ENCODE measurements at regions of chr16 and their contacts with region 1.

Region 1: DNA sequence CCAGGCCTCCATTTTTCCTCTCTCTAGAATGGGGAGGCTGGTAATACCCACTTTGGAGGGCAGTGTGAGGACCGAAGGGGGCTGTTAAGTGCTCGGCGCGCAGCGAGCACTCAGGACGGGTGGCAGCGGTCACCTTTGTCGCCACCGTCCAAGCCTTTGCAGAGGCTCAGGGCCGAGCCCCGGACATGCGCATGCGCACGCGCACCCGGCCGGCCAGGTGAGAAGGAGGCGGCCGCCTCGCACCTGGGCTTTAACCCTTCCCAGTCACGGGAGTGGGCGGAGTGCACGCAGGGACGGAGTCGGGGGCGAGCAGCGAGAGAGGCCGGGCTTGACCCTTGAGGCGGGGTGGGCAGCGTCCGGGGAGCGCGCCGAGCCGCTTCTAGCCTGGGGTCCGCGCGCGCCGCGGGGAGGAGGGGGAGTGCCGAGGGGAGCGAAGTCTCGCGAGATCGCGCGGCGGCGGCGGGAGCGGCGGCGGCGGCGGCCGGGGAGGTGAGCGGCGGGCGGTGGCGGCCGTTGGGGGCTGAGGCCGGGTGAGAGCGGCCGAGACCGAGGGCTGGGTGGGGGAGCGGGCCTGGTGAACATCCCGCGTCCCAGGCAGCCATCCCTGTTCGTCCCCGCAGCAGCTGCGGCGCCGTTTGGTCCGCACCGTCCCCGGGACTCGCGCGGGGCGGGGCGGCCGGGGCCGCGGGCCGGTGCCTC is at the start of gene MRTFB:
- DNase-seq: peak; percentile 78 to 90 (median 83)
- ATAC-seq: peak; percentile 48 to 96 (median 84)
- H3K4me3 ChIP-seq: peak within 1 kb of the TSS; percentile 76 to 99 (median 89)
- H3K27ac ChIP-seq: peak within 1 kb of the TSS; percentile 58 to 90 (median 81)
- H3K4me1 ChIP-seq: peaks cover 0 to 23% (median 11%) of the 10 kb centered on the region in 12 donors
- H3K27me3 ChIP-seq: no peaks in the 10 kb centered on the region
- CTCF ChIP-seq: no peak
- POLR2A ChIP-seq: peak in 1 of 2 donors; percentile 72
- total RNA-seq, gene MRTFB: 16.3 to 38.3 (median 32.4) TPM

Region 2: GRCh38 chr16:13935408-13935807 is 135.6 kb before region 1 on chr16:
- intact Hi-C with region 1: loop called in 2 of 10 experiments (anchors 5 to 10 kb)
- DNase-seq: no peak
- ATAC-seq: no peak
- H3K4me3 ChIP-seq: no peak overlapping the region
- H3K27ac ChIP-seq: no peak overlapping the region
- H3K4me1 ChIP-seq: peaks cover 0 to 11% (median 5%) of the 10 kb centered on the region in 12 donors
- H3K27me3 ChIP-seq: no peaks in the 10 kb centered on the region
- CTCF ChIP-seq: peak in 9 of 12 donors; percentile 17 to 50 (median 36)
- POLR2A ChIP-seq: no peak

Region 3: DNA sequence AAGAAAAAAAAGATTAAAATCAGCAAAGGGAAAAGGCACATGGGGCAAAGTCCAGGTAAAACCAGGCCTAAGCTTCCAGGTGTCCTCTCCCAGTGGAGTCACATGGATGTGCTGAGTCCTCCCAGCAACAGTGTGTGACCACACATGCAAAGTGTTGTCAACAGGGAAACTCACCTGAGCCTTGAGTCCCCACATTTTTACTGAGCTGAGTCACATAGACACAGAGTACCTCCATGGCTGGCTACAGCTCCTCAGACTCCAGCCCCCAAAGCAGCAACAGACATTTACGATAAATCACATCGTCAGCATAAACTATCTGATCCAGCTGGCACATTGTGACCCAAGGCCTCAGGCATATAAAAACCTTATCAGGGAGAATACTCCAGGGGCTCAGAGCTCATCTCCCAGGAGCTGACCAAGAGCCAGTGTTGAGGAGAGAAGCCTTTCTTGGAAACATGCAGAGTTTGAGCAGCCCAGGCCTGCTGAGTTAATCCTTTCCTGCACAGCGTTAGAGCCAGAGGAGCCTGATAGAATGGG is 130.6 kb before region 1 on chr16:
- intact Hi-C with region 1: loop called in 2 of 10 experiments (anchors 5 to 10 kb)
- DNase-seq: no peak
- ATAC-seq: no peak
- H3K4me3 ChIP-seq: no peak overlapping the region
- H3K27ac ChIP-seq: no peak overlapping the region
- H3K4me1 ChIP-seq: peaks cover 0 to 11% (median 5%) of the 10 kb centered on the region in 12 donors
- H3K27me3 ChIP-seq: no peaks in the 10 kb centered on the region
- CTCF ChIP-seq: no peak
- POLR2A ChIP-seq: no peak

Region 4: DNA sequence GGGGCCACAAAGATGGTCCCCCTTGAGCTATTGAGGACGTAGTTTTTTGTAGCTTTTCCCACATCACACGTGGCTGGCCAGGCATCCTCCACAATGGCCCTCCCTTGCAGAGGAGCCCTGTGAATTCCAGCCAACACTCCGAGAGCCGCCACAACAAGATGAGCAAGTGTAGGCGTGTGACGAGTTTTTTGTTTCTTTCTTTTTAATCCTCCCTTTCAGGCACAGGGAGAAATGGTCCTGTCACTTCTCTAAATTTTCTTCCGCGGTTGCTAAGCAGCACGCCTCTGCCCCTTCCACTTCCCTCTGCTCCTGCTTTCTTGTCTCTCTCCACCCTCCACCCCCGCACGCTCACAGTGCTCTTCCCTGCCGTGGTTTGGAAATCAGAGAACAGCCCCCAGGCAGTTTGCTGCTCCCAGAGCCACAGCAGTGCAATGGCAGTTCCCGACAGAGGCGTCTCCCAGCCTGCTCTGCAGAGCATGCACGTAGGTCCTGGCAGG is 67.9 kb before region 1 on chr16:
- intact Hi-C with region 1: loop called in 4 of 10 experiments (anchors 5 to 10 kb)
- DNase-seq: peak; percentile 74 to 83 (median 78)
- ATAC-seq: peak; percentile 41 to 75 (median 74)
- H3K4me3 ChIP-seq: peak overlapping the region in 11 of 12 donors; percentile 6 to 51 (median 37)
- H3K27ac ChIP-seq: peak overlapping the region in 11 of 12 donors; percentile 27 to 85 (median 74)
- H3K4me1 ChIP-seq: peaks cover 0 to 70% (median 47%) of the 10 kb centered on the region in 12 donors
- H3K27me3 ChIP-seq: no peaks in the 10 kb centered on the region
- CTCF ChIP-seq: peak in 6 of 12 donors; percentile 6 to 37 (median 24)
- POLR2A ChIP-seq: no peak

Region 5: DNA sequence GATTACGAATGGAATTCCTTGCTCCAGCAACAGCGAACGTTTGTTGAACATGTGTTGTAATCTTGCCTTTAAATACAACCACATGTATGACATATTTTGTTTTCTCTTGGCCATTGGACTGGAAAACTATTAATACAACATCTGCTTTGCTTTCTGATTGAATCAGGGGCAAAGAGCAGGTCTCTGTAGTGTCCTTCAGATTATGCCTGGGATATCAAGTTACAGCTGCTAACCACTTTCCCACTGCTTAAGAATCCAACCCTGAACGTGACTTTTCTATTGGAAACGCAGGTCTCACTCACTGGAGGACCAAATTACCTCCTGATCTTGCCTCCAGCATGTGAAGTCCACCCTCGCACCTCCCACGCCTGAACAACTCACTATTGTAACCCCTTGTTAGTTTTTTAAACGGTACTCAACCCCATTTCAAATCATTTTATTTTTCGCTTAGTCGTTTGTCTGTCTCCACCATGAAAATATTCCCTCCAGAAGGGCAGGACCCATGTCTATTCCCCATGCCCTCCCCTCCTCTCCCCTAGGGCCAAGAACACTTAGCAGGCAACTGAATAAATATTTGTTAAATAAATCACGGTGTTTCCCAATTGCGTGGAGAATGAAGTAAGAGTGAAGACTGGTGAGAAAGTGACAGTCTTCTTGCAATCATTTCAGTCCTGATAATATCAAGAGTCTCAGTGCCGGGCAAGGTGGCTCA is 57.3 kb before region 1 on chr16:
- intact Hi-C with region 1: loop called in 4 of 10 experiments (anchors 5 to 10 kb)
- DNase-seq: peak in 2 of 5 donors; percentile 36 to 48
- ATAC-seq: peak; percentile 56 to 74 (median 68)
- H3K4me3 ChIP-seq: peak overlapping the region in 4 of 12 donors; percentile 7 to 32 (median 10)
- H3K27ac ChIP-seq: peak overlapping the region in 11 of 12 donors; percentile 4 to 86 (median 67)
- H3K4me1 ChIP-seq: peaks cover 0 to 54% (median 30%) of the 10 kb centered on the region in 12 donors
- H3K27me3 ChIP-seq: no peaks in the 10 kb centered on the region
- CTCF ChIP-seq: no peak
- POLR2A ChIP-seq: no peak

Region 6: DNA sequence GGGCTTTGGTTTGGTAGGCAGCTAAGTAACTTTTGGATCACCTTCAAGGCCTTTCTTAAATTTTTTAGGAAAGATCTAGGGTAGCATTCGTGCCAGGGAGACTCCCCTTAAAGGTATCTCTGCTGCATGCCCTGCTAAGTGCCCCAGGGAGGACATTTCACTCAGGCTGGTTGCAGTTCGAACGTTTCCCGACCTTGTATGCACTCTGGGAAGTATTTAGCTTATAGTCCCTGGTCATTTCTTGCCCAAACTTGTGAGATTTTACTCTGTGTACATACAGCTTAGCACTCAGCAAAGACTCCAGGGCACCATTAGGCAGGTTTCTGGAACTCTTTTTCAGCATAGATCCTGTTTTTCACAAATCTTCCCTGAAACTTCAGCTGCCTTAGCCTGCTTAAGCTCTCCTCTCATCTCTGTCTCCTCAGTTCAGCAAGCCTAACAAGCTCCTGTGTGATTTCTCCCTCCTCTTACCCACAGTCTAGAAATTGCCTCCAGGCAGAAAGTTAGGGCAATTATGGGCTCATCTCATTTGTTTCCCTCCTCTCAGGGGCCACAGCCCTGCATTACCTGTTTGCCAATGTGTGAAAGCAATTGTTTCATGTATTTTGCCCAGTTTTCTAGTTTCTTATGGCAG is 84.7 kb after region 1 on chr16:
- intact Hi-C with region 1: no loop called
- DNase-seq: no peak
- ATAC-seq: peak; percentile 50 to 62 (median 60)
- H3K4me3 ChIP-seq: no peak overlapping the region
- H3K27ac ChIP-seq: peak overlapping the region in 8 of 12 donors; percentile 8 to 45 (median 34)
- H3K4me1 ChIP-seq: peaks cover 0 to 35% (median 6%) of the 10 kb centered on the region in 12 donors
- H3K27me3 ChIP-seq: no peaks in the 10 kb centered on the region
- CTCF ChIP-seq: no peak
- POLR2A ChIP-seq: no peak

Region 7: DNA sequence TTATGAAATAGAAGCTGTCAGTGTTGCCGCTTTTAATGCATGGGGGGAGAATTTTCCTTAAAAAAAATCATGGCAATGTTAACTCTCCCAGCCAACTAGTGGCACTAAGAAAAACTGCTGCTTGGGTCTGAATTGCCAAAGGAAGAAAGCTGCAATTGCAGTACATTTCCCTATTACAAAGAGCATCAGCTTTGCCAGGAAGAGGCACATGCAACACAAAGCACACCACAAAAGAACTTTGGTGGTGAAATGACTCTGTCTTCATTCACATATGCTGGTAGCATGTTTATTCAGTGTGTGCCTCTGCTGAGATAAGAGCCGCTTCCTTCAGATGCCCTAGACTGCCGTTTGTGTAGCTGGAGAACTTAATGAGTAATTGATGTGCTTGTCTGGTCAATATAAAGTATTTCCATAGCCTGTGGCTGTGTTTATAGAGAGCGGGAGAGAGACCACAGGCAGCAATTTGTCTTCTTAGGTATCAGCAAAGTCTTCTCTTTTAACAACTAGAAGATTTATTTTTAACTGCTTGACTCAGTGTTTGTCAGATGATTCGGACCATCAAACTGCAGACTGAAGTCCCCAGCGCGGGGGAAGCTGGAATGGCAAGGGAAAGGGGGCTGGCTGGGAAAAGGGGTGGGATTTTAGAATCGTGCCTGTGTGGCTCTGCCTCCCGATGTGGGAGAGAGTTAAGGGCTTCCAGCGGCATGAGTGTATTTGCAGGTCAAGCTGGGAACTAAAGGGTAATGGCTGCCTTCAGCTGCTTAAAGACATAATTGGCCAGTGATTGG is 115.2 kb after region 1 on chr16:
- intact Hi-C with region 1: loop called in 7 of 10 experiments (anchors 5 to 10 kb)
- DNase-seq: peak in 4 of 5 donors; percentile 37 to 60 (median 46)
- ATAC-seq: peak; percentile 59 to 75 (median 64)
- H3K4me3 ChIP-seq: peak overlapping the region in 11 of 12 donors; percentile 28 to 65 (median 51)
- H3K27ac ChIP-seq: peak overlapping the region; percentile 62 to 85 (median 75)
- H3K4me1 ChIP-seq: peaks cover 0 to 67% (median 36%) of the 10 kb centered on the region in 12 donors
- H3K27me3 ChIP-seq: no peaks in the 10 kb centered on the region
- CTCF ChIP-seq: peak; percentile 16 to 58 (median 45)
- POLR2A ChIP-seq: peak in 1 of 2 donors; percentile 44

Region 8: DNA sequence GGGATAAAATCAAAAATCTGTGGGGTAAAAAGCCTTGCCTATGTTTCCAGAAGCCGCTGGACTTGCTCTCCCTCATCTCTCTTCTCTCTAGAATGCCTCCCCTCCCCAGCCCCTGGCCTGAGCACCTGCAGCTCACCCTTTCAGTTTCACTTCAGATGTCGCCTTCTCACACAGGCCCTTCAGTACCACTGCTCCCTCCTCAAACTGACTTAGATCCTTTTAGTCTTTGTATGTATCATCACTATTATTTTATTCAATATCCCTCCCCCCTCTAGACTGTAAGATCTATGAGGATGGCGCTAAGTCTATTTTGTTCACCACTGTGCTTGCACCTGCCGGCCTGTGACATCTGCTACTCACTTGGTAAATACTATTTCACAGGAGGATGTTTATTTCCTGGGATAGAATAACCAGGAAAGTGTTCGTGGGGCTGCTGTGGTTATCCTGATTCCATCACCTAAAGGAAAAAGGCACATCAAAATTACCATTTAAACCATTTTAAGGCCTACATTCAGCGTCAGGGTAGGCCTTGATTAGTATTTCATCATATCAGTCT is 122.4 kb after region 1 on chr16:
- intact Hi-C with region 1: loop called in 7 of 10 experiments (anchors 5 to 10 kb)
- DNase-seq: no peak
- ATAC-seq: no peak
- H3K4me3 ChIP-seq: peak overlapping the region in 2 of 12 donors; percentile 2 to 6
- H3K27ac ChIP-seq: peak overlapping the region in 3 of 12 donors; percentile 12 to 18 (median 15)
- H3K4me1 ChIP-seq: peaks cover 0 to 43% (median 16%) of the 10 kb centered on the region in 12 donors
- H3K27me3 ChIP-seq: no peaks in the 10 kb centered on the region
- CTCF ChIP-seq: no peak
- POLR2A ChIP-seq: no peak

Measured in heart left ventricle (tissue), 16 donors.